Endothelial cell of umbilical vein (primary cell): ENCODE measurements at regions of chr9 and their contacts with region 1.

Region 1: GRCh38 chr9:38482918-38483592 is 58.8 kb upstream of the IGFBPL1 start:
- DNase-seq: no peak
- H3K4me3 ChIP-seq: no peak overlapping the region
- H3K27ac ChIP-seq: no peak overlapping the region
- H3K4me1 ChIP-seq: peaks cover 2% of the 10 kb centered on the region
- H3K27me3 ChIP-seq: peaks cover 0 to 2% of the 10 kb centered on the region in 2 experiments
- CTCF ChIP-seq: no peak
- POLR2A ChIP-seq: no peak

Region 2: GRCh38 chr9:38527504-38527903 is 44.4 kb after region 1 on chr9:
- CTCF ChIA-PET with region 1: no interaction called
- POLR2A ChIA-PET with region 1: no interaction called
- dilution Hi-C with region 1: no loop called
- intact Hi-C with region 1: loop called (anchors 10 kb)
- DNase-seq: no peak
- H3K4me3 ChIP-seq: no peak overlapping the region
- H3K27ac ChIP-seq: no peak overlapping the region
- H3K4me1 ChIP-seq: no peaks in the 10 kb centered on the region
- H3K27me3 ChIP-seq: peaks cover 7 to 12% of the 10 kb centered on the region in 2 experiments
- CTCF ChIP-seq: no peak
- POLR2A ChIP-seq: no peak

Region 3: DNA sequence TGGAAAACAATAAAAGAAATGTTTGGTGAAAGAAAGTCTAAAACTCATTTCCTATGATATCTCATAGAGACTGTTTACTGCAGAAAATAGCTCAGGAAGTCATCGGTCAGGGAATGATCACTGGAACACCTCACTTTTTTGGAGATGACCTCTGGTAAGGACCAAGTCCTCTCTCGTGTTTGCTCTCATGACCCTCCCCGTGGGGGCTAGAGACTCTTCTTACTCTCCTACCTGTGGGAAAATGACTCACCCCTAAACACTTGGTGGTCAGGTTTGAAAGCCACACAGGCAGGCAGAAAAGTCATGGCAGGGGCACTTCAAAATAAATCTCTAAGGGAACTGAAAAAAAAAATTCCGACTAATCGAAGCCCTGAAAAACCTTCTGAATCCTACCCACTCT is 188.7 kb after region 1 on chr9:
- CTCF ChIA-PET with region 1: no interaction called
- POLR2A ChIA-PET with region 1: no interaction called
- dilution Hi-C with region 1: no loop called
- intact Hi-C with region 1: no loop called
- DNase-seq: no peak
- H3K4me3 ChIP-seq: no peak overlapping the region
- H3K27ac ChIP-seq: no peak overlapping the region
- H3K4me1 ChIP-seq: peaks cover 3% of the 10 kb centered on the region
- H3K27me3 ChIP-seq: no peaks in the 10 kb centered on the region
- CTCF ChIP-seq: no peak
- POLR2A ChIP-seq: no peak